ENCODE measurements at regions of chr3 and their contacts with region 1.

Region 1: GRCh38 chr3:129490242-129491045 is 38.0 kb upstream of the RHO start:
- DNase-seq: peak; percentile 73 to 85 (median 83)
- H3K4me3 ChIP-seq: no peak overlapping the region
- H3K27ac ChIP-seq: no peak overlapping the region
- H3K4me1 ChIP-seq: peaks cover 0 to 9% (median 4%) of the 10 kb centered on the region in 4 experiments
- H3K27me3 ChIP-seq: no peaks in the 10 kb centered on the region

Region 2: GRCh38 chr3:129365296-129366136 is 124.9 kb before region 1 on chr3:
- CTCF ChIA-PET with region 1: no interaction called
- POLR2A ChIA-PET with region 1: no interaction called
- DNase-seq: peak in 2 of 3 donors; percentile 59 to 73
- H3K4me3 ChIP-seq: peak overlapping the region in 1 of 7 experiments; percentile 25
- H3K27ac ChIP-seq: no peak overlapping the region
- H3K4me1 ChIP-seq: peaks cover 0 to 12% (median 6%) of the 10 kb centered on the region in 4 experiments
- H3K27me3 ChIP-seq: no peaks in the 10 kb centered on the region

Region 3: DNA sequence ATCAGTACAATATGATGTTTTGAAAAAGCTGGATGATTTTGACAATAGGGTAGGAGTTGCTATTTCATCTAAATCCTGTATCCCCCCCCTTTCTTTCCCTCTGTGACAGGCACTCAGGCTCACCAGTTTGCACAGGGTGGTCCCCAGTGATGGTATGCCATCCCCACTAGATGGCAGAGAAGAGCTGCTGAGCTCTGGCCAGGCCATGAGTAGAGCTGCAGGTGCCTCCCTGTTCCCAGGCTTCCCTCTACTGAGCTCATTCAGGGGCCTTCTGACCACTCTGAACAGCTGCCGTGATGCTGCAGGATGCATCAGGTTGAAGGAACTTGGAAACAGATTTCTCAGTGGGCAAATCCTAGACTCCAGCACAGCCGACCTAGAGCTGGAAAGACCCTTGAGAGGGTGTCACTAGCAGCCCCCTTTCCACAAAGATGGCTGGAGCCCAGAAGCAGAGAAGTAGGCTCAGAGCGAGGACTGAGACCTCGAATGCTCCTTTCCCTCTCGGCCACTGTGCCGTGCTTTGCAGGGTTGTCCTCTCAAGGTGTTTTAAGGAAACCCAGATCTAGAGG is 107.1 kb before region 1 on chr3:
- CTCF ChIA-PET with region 1: interaction called, 11 read pairs
- POLR2A ChIA-PET with region 1: no interaction called
- DNase-seq: peak; percentile 47 to 70 (median 68)
- H3K4me3 ChIP-seq: no peak overlapping the region
- H3K27ac ChIP-seq: no peak overlapping the region
- H3K4me1 ChIP-seq: peaks cover 0 to 8% (median 2%) of the 10 kb centered on the region in 4 experiments
- H3K27me3 ChIP-seq: no peaks in the 10 kb centered on the region

Region 4: GRCh38 chr3:129474984-129475804 is 15.2 kb before region 1 on chr3:
- CTCF ChIA-PET with region 1: interaction called, 15 read pairs
- POLR2A ChIA-PET with region 1: interaction called, 3 read pairs
- DNase-seq: no peak
- H3K4me3 ChIP-seq: no peak overlapping the region
- H3K27ac ChIP-seq: no peak overlapping the region
- H3K4me1 ChIP-seq: no peaks in the 10 kb centered on the region
- H3K27me3 ChIP-seq: no peaks in the 10 kb centered on the region

Region 5: GRCh38 chr3:129582799-129583198 is 92.4 kb after region 1 on chr3:
- CTCF ChIA-PET with region 1: no interaction called
- POLR2A ChIA-PET with region 1: no interaction called
- DNase-seq: no peak
- H3K4me3 ChIP-seq: no peak overlapping the region
- H3K27ac ChIP-seq: peak overlapping the region in 1 of 2 experiments; percentile 4
- H3K4me1 ChIP-seq: peaks cover 0 to 37% (median 28%) of the 10 kb centered on the region in 4 experiments
- H3K27me3 ChIP-seq: no peaks in the 10 kb centered on the region

Region 6: GRCh38 chr3:129627429-129628168 is 137.2 kb after region 1 on chr3:
- CTCF ChIA-PET with region 1: interaction called, 17 read pairs
- POLR2A ChIA-PET with region 1: no interaction called
- DNase-seq: peak; percentile 83 to 91 (median 90)
- H3K4me3 ChIP-seq: peak overlapping the region; percentile 51 to 81 (median 71)
- H3K27ac ChIP-seq: no peak overlapping the region
- H3K4me1 ChIP-seq: peaks cover 0 to 44% (median 28%) of the 10 kb centered on the region in 4 experiments
- H3K27me3 ChIP-seq: no peaks in the 10 kb centered on the region

Region 7: DNA sequence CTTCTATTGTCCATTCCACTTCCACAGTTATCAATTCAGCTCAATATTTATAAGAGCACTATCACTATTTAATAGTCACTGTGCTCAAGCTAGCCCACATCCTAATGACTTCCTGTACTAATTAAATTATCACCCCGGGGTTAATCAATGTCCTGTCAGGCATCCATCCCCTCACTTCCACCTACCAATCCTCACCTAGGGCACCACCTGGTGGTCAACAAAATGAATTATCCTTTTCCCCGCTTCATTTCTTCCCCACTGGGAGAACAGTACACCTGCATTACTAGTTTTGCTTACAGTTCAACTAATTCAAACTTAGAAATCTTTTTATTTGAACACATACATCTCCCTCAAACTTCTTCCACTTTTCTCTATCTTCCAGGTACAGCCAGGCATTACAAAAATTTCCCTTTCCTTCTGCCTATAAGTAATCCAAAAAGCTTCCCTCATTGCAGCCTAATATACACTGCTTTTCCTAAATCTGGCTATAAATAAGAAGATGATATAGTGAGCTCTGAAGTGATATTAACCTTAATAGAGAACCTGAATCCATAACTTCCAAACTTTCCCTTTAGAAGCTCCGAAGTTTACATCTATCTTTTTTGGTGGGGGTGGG is 334.6 kb after region 1 on chr3:
- CTCF ChIA-PET with region 1: interaction called, 16 read pairs
- POLR2A ChIA-PET with region 1: interaction called, 3 read pairs
- DNase-seq: peak; percentile 69 to 77 (median 70)
- H3K4me3 ChIP-seq: no peak overlapping the region
- H3K27ac ChIP-seq: no peak overlapping the region
- H3K4me1 ChIP-seq: peaks cover 8 to 32% (median 16%) of the 10 kb centered on the region in 4 experiments
- H3K27me3 ChIP-seq: no peaks in the 10 kb centered on the region